Activated CD4-positive, alpha-beta T cell treated with anti-CD3 and anti-CD28 coated beads for 36 hours (primary cell): ENCODE measurements at regions of chr1 and their contacts with region 1.

Region 1: DNA sequence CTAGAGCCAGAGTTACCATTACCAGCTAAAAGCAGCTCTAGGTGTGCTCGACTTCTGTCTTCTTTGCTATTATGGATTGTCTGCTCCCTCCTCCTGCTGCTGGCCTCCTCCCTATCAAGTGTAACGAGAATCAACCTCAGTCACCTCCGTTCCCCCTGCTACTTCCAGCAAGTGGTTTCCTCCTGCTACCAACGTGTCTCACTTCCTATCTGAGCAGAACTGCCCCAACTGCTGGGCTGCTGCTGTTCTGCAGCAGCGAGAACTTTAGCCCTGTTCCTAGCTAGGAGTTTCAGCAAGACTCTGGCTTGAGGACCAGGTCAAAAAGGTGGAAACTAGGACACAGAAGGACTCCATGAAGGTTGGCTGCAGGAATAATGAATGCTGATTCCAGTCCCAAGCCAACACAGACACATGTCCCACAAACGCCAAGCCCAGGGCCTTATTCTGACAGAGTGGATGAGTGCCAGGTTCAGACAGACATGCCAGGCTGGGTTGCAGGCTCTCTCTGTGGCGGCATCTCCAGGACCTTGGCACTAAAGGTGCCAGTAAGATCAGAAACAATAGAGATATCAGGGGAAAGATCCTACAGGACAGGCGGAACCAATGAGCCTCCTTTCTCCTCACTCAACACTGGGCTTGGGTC is 46.9 kb downstream of the CD34 start:
- DNase-seq: peak; percentile 70
- ATAC-seq: peak; percentile 56
- H3K4me3 Mint-ChIP-seq: peak overlapping the region; percentile 6
- H3K27ac Mint-ChIP-seq: peak overlapping the region; percentile 66
- H3K4me1 Mint-ChIP-seq: peaks cover 64% of the 10 kb centered on the region
- H3K27me3 Mint-ChIP-seq: no peaks in the 10 kb centered on the region

Region 2: DNA sequence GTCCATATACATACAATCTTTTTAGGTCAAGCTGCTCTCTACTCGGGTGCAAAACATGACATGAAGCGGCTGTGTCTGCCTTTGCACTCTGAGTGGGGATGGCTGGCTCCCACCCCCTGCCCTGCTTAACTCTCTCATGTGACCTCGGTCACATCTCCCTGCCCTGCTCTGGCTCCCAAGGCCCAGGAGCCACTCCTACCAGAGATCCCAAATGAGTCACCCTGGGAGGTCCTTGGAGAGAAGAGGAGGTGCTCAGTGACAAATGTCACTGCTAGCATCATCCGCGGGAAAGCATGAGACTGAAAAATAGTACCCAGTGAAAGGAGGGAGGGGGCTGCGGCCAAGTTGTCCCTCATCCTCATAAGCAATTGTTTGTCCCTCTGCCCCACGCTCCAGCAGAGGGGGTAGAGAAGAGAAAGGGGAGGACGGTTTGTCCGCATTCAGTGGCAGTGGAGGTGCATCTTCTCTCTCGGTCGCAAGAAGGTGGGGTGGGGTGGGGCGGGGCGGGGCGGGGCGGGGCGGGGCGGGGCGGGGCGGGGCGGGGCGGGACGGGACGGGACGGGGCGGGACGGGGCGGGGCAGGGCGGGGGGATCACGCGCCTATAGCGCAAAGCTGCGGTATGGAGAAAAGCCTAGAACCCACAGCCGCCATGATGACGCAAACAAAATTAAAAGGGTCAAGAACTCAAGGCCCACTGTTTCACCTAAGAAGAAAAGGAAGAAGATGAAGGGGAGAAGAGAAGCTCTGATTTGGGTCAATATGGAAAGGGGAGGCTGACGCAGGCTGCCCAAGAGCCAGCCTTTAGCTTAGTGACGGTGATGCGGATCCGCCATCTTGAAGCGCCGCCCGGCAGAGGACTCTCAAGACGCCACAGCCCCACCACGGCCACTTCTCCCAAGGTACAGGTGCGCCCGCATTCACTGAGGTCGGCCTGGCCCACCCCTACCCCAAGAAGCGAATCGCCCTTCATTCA is 45.9 kb before region 1 on chr1:
- CTCF ChIA-PET with region 1: interaction called, 297 read pairs
- POLR2A ChIA-PET with region 1: interaction called, 19 read pairs
- intact Hi-C with region 1: no loop called
- DNase-seq: no peak
- ATAC-seq: no peak
- H3K4me3 Mint-ChIP-seq: no peak overlapping the region
- H3K27ac Mint-ChIP-seq: no peak overlapping the region
- H3K4me1 Mint-ChIP-seq: peaks cover 78% of the 10 kb centered on the region
- H3K27me3 Mint-ChIP-seq: no peaks in the 10 kb centered on the region

Region 3: GRCh38 chr1:207853372-207853757 is 10.6 kb before region 1 on chr1:
- CTCF ChIA-PET with region 1: interaction called, 10 read pairs
- POLR2A ChIA-PET with region 1: interaction called, 4 read pairs
- intact Hi-C with region 1: loop called in 1 of 2 experiments (anchors 2 kb)
- DNase-seq: no peak
- ATAC-seq: no peak
- H3K4me3 Mint-ChIP-seq: no peak overlapping the region
- H3K27ac Mint-ChIP-seq: no peak overlapping the region
- H3K4me1 Mint-ChIP-seq: peaks cover 75% of the 10 kb centered on the region
- H3K27me3 Mint-ChIP-seq: no peaks in the 10 kb centered on the region